Breast epithelium (tissue), 4 donors: ENCODE measurements at regions of chr2 and their contacts with region 1.

Region 1: GRCh38 chr2:230124757-230125431 is 56.2 kb upstream of the SLC16A14 start:
- DNase-seq: no peak
- H3K4me3 ChIP-seq: no peak overlapping the region
- H3K27ac ChIP-seq: no peak overlapping the region
- H3K4me1 ChIP-seq: no peaks in the 10 kb centered on the region
- H3K27me3 ChIP-seq: no peaks in the 10 kb centered on the region
- CTCF ChIP-seq: no peak
- POLR2A ChIP-seq: no peak

Region 2: GRCh38 chr2:228699400-228699799 is 1425.5 kb before region 1 on chr2:
- intact Hi-C with region 1: loop called (anchors 10 kb)
- DNase-seq: no peak
- H3K4me3 ChIP-seq: no peak overlapping the region
- H3K27ac ChIP-seq: no peak overlapping the region
- H3K4me1 ChIP-seq: no peaks in the 10 kb centered on the region
- H3K27me3 ChIP-seq: no peaks in the 10 kb centered on the region
- CTCF ChIP-seq: no peak
- POLR2A ChIP-seq: no peak

Region 3: GRCh38 chr2:231861532-231861931 is 1736.6 kb after region 1 on chr2:
- intact Hi-C with region 1: no loop called
- DNase-seq: no peak
- H3K4me3 ChIP-seq: no peak overlapping the region
- H3K27ac ChIP-seq: no peak overlapping the region
- H3K4me1 ChIP-seq: no peaks in the 10 kb centered on the region
- H3K27me3 ChIP-seq: no peaks in the 10 kb centered on the region
- CTCF ChIP-seq: no peak
- POLR2A ChIP-seq: no peak